ENCODE measurements at regions of chr2 and their contacts with region 1.

Region 1: GRCh38 chr2:7437716-7438632 is 520.8 kb downstream of the RNF144A start:
- DNase-seq: no peak
- CTCF ChIP-seq: no peak

Region 2: GRCh38 chr2:7405861-7406715 is 31.9 kb before region 1 on chr2:
- CTCF ChIA-PET with region 1: no interaction called
- POLR2A ChIA-PET with region 1: no interaction called
- DNase-seq: no peak
- CTCF ChIP-seq: no peak

Region 3: DNA sequence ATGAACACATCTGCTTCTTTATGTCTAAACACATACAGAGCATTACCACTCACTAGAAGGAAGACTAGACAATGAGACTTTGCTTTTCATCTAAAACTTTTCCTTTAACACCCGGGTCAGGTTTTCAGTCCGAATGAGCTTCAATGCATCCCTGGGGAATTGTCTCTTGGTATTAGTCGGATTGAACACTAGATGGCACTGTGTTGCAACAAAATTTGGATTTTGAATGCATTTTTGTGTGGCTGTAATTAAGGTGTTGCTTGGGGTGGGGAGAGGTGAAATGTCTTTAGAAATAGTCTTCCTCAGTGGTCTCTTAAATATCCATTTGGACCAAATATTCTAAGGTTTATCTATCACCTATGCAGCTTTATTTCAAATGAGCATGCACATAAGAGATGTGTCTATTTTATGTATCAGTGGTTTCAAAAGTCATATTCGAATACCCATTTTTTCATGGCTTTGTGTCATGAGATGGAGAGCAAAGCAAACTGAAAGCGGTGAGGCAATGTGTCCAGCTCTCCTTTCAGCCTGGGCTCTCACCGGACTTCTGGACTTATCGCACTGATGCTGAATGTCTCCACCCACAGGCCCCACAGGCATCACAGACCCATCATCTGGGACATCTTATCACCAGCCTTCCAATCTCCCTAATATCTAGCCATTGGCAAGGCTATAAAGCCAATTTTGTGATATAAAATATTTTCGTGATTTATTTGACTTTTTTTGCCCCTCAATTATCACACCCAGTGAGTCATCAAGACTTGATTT is 10.5 kb before region 1 on chr2:
- CTCF ChIA-PET with region 1: interaction called, 14 read pairs
- POLR2A ChIA-PET with region 1: no interaction called
- DNase-seq: peak; percentile 52
- CTCF ChIP-seq: peak; percentile 59

Region 4: GRCh38 chr2:7456762-7457161 is 18.8 kb after region 1 on chr2:
- CTCF ChIA-PET with region 1: no interaction called
- POLR2A ChIA-PET with region 1: no interaction called
- DNase-seq: no peak
- CTCF ChIP-seq: no peak

Measured in GM10248 (cell line).